Heart left ventricle (tissue), 16 donors: ENCODE measurements at regions of chr4 and their contacts with region 1.

Region 1: DNA sequence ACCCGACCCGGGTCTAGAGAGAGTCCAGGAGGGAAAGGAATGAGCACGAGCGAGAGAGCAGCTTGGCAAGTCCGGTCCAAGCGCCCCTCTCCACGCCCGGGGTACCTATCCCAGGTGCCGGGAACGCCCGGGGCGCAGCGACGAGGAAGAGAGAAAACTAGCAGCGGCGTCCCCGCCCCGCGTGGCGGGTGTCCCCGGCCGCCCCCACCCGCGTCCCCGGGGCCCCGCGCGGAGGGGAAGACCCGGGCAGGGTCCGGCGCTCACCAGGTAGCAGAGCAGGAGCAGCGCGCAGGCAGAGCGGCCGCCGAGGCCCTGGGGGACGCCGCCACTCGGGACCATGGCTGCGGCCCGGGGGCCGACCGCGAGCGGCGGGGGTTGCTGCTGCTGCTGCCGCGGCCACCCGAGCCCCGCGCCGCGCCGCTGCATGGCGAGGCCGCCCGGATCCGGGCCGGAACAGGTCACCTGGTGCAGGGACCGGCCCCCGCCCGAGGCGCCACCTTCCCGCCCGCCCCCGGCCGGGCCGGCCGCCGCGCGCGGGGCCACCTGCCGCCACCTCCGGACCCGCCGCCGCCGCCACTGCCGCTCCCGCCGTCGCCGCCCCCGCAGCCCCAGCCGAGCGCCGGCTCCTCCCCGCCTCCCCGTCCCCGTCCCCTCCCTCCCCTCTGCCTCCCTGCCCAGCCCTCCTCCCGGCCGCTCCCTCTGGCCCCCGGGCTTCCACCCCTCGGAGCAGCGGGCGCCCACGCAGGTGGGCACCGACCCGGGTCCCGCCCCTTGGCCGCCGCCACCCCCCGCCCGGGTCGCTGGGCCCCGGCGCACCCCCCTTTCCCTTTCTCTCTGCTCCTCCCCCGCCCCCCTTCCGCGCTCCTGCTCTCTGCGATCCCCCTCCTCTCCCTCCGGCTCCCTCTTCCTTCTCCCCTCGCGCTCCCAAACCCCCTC is at the start of gene SEL1L3:
- DNase-seq: peak in 4 of 5 donors; percentile 29 to 72 (median 52)
- ATAC-seq: peak in 2 of 4 donors; percentile 21 to 44
- H3K4me3 ChIP-seq: peak within 1 kb of the TSS; percentile 62 to 94 (median 76)
- H3K27ac ChIP-seq: peak within 1 kb of the TSS in 11 of 12 donors; percentile 25 to 86 (median 68)
- H3K4me1 ChIP-seq: peaks cover 0 to 43% (median 25%) of the 10 kb centered on the region in 12 donors
- H3K27me3 ChIP-seq: no peaks in the 10 kb centered on the region
- CTCF ChIP-seq: no peak
- POLR2A ChIP-seq: no peak
- total RNA-seq, gene SEL1L3: 2.1 to 20.7 (median 3.6) TPM

Region 2: DNA sequence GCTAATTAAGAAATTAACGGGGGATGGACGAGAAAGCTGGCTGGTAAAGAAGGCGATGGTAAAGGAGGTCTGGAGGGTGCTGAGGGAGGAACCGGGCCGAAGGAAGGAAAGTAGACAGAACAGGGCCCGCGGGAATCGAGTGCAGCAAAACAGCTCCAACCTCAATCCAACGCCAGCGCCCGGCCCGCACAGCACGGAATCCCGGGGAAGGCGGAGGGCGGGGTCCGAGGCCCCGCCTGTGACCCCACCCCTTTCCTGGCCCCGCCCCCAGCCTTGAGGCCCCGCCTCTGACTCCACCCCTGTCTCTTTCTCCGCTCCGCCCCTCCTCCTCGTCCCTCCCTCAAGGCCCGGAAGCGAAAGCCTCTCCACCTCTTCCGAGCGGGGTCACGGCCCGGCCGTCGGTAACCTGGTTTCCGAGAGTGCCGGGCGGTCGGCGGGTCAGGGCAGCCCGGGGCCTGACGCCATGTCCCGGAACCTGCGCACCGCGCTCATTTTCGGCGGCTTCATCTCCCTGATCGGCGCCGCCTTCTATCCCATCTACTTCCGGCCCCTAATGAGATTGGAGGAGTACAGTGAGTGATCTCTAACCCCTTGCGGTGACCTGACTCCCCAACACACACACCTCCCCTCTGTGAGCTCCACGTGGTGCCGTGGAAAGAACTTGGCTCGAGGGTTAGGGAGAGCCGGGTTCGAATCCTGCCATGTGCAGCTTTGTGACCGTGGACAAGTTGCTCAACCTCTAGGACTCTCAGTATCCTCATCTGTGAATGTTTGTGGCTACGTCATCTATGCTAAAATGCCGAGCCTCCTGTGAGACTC is 51.4 kb after region 1 on chr4 and contains the start of gene SMIM20:
- intact Hi-C with region 1: loop called in 4 of 10 experiments (anchors 5 to 10 kb)
- DNase-seq: peak; percentile 92 to 95 (median 94)
- ATAC-seq: peak; percentile 97 to 99 (median 98)
- H3K4me3 ChIP-seq: peak within 1 kb of the TSS; percentile 45 to 94 (median 76)
- H3K27ac ChIP-seq: peak within 1 kb of the TSS; percentile 60 to 95 (median 90)
- H3K4me1 ChIP-seq: peaks cover 2 to 23% (median 15%) of the 10 kb centered on the region in 12 donors
- H3K27me3 ChIP-seq: no peaks in the 10 kb centered on the region
- CTCF ChIP-seq: peak in 1 of 12 donors; percentile 5
- POLR2A ChIP-seq: peak in 1 of 2 donors; percentile 69
- total RNA-seq, gene SMIM20: 27.4 to 50.8 (median 37.2) TPM